ENCODE measurements at regions of chr2 and their contacts with region 1.

Region 1: GRCh38 chr2:33033606-33034081 is 86.9 kb downstream of the LTBP1 start:
- DNase-seq: peak; percentile 72
- ATAC-seq: peak; percentile 93
- H3K4me3 ChIP-seq: no peak overlapping the region
- H3K27ac ChIP-seq: no peak overlapping the region
- H3K4me1 ChIP-seq: 0 out of 2 replicates have a peak, but pooled peaks cover 5% of the 10 kb centered on the region
- H3K27me3 ChIP-seq: no peaks in the 10 kb centered on the region
- CTCF ChIP-seq: peak; percentile 91

Region 2: DNA sequence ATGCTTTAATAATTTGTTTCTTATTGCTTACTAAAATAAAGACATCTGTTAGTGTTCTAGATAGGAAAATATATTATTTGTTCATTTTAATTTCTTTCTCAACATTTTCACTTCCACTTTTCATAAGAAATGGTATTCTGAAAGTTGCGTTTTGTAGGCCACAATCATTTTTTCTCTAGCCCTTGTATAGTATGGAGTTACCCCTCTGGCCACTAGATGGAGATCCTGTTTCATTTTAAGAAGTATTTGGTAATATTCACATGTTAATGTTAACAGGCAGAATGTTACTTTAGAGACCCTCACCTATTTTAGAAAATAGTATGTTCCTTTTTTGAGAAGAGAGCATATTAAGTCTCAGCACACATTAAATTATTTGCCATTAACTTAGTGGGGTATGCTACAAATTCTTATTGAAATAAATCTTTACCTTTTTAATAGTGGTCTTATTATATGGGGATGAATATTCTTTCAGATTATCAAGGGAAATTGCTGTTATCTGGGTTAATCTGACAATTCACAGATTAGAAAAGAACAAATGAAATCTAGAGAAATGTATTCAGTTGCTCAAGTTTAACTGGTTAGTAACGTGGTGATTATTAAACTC is 479.7 kb before region 1 on chr2:
- CTCF ChIA-PET with region 1: no interaction called
- POLR2A ChIA-PET with region 1: no interaction called
- intact Hi-C with region 1: loop called (anchors 1 kb)
- DNase-seq: peak; percentile 54
- ATAC-seq: peak; percentile 77
- H3K4me3 ChIP-seq: no peak overlapping the region
- H3K27ac ChIP-seq: no peak overlapping the region
- H3K4me1 ChIP-seq: no peaks in the 10 kb centered on the region
- H3K27me3 ChIP-seq: no peaks in the 10 kb centered on the region
- CTCF ChIP-seq: peak; percentile 83

Region 3: DNA sequence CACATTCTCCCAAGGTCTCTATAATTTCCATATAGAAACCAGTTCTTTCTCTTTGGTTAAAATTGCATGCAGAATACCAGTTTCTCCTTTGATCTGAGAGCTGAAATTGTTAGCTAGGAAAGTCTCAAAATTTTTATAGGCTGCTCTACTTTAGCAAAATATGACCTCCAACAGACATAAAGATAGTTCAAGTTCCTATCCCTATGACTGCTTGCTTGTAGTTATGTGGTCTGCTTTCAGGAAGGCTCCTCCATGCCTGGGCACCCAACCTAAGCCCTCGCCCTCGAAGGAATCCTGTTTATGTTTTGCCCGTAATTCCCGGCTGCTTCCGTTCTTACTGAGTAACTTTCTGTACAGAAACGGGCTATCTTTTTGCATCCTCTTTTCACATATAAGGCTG is 114.9 kb before region 1 on chr2:
- CTCF ChIA-PET with region 1: no interaction called
- POLR2A ChIA-PET with region 1: no interaction called
- intact Hi-C with region 1: no loop called
- DNase-seq: no peak
- ATAC-seq: no peak
- H3K4me3 ChIP-seq: no peak overlapping the region
- H3K27ac ChIP-seq: no peak overlapping the region
- H3K4me1 ChIP-seq: no peaks in the 10 kb centered on the region
- H3K27me3 ChIP-seq: no peaks in the 10 kb centered on the region
- CTCF ChIP-seq: no peak

Region 4: GRCh38 chr2:32946314-32947075 is 87.1 kb before region 1 on chr2 and contains the start of gene LTBP1:
- CTCF ChIA-PET with region 1: interaction called, 7 read pairs
- POLR2A ChIA-PET with region 1: no interaction called
- intact Hi-C with region 1: loop called (anchors 1 kb)
- DNase-seq: peak; percentile 80
- ATAC-seq: peak; percentile 75
- H3K4me3 ChIP-seq: peak within 1 kb of the TSS; percentile 72
- H3K27ac ChIP-seq: 0 out of 2 replicates have a peak within 1 kb of the TSS, but pooled peaks have one; percentile 21
- H3K4me1 ChIP-seq: peaks cover 7% of the 10 kb centered on the region
- H3K27me3 ChIP-seq: no peaks in the 10 kb centered on the region
- CTCF ChIP-seq: peak; percentile 95
- total RNA-seq, gene LTBP1: 34.0 and 45.9 TPM in 2 replicates

Region 5: DNA sequence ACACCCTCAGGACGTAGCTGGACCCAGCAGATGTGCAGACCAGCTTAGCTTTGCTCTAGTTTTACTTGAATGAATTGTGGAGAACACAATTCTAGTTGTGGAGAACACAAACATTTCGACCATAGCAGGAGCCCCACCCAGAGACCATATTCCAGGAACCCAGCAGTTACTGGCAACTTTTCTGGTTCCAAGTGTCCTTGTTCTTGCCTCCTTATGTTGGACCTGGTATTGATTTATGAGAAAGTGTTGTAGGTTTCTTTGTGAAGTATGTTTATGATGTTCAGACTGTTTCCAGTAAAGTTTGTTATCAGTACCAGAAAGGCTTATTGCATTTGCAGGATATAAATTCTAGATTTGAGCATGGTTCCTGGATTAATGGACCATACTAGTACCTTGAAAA is 35.9 kb before region 1 on chr2:
- CTCF ChIA-PET with region 1: no interaction called
- POLR2A ChIA-PET with region 1: no interaction called
- intact Hi-C with region 1: no loop called
- DNase-seq: no peak
- ATAC-seq: no peak
- H3K4me3 ChIP-seq: no peak overlapping the region
- H3K27ac ChIP-seq: no peak overlapping the region
- H3K4me1 ChIP-seq: no peaks in the 10 kb centered on the region
- H3K27me3 ChIP-seq: no peaks in the 10 kb centered on the region
- CTCF ChIP-seq: no peak

Region 6: GRCh38 chr2:33086400-33087015 is 52.9 kb after region 1 on chr2:
- CTCF ChIA-PET with region 1: interaction called, 11 read pairs
- POLR2A ChIA-PET with region 1: no interaction called
- intact Hi-C with region 1: loop called (anchors 1 kb)
- DNase-seq: peak; percentile 29
- ATAC-seq: peak; percentile 60
- H3K4me3 ChIP-seq: no peak overlapping the region
- H3K27ac ChIP-seq: no peak overlapping the region
- H3K4me1 ChIP-seq: peaks cover 9% of the 10 kb centered on the region
- H3K27me3 ChIP-seq: no peaks in the 10 kb centered on the region
- CTCF ChIP-seq: no peak

Region 7: GRCh38 chr2:33229646-33230045 is 196.0 kb after region 1 on chr2:
- CTCF ChIA-PET with region 1: interaction called, 6 read pairs
- POLR2A ChIA-PET with region 1: no interaction called
- intact Hi-C with region 1: loop called (anchors 2 kb)
- DNase-seq: peak; percentile 33
- ATAC-seq: peak; percentile 8; the same call in 1 of the 2 replicates
- H3K4me3 ChIP-seq: no peak overlapping the region
- H3K27ac ChIP-seq: peak overlapping the region; percentile 93
- H3K4me1 ChIP-seq: peaks cover 38% of the 10 kb centered on the region
- H3K27me3 ChIP-seq: no peaks in the 10 kb centered on the region
- CTCF ChIP-seq: peak; percentile 25; the same call in 1 of the 2 replicates

Region 8: DNA sequence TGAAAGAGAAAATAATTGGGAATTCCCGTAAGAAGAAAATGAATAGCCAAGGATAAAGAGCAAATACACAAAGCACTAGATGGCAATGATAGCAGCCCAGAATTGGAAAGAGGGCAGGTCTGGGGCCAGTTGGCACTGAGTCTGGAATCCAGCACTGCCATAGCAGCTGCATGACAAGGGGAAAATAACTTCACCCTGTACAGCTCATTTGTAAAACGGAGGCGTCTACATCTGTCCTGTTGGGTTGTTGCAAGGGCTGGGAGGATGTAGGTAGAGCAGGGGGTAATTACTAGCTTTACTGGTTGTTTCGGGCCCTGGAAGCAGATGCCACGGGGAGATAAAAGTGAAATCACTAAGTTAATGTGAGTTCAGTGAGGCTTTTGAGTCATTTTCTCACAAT is 332.8 kb after region 1 on chr2:
- CTCF ChIA-PET with region 1: no interaction called
- POLR2A ChIA-PET with region 1: no interaction called
- intact Hi-C with region 1: no loop called
- DNase-seq: no peak
- ATAC-seq: no peak
- H3K4me3 ChIP-seq: no peak overlapping the region
- H3K27ac ChIP-seq: no peak overlapping the region
- H3K4me1 ChIP-seq: 0 out of 2 replicates have a peak, but pooled peaks cover 8% of the 10 kb centered on the region
- H3K27me3 ChIP-seq: no peaks in the 10 kb centered on the region
- CTCF ChIP-seq: no peak

Region 9: DNA sequence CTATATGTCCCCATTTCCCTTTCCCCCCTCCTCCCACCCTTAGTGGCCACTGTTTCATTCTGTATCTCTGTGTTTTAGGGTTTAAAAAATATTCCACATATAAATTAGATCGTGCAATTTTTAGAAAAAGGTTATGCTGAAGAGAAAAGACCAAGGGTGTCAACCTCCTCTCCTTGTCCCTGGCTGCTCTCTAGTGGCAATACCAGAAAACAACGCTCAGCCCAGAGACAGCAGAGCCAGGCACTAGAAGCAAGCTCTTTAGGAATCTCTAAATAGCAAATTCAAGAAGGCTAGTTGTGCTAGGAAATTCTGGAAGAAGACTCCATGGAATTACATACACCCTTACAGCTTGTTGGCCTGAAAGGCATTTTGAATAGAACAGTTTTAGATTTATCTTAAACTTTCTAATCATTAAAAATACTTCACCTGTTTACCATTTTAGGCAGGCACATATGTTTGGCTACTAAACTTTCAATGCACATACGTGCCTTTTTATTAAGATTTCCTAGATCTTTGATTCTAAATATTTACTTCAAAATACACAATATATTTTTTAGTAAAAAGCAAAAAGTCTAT is 407.7 kb after region 1 on chr2:
- CTCF ChIA-PET with region 1: interaction called, 5 read pairs
- POLR2A ChIA-PET with region 1: no interaction called
- intact Hi-C with region 1: loop called (anchors 2 kb)
- DNase-seq: peak; percentile 68
- ATAC-seq: peak; percentile 90
- H3K4me3 ChIP-seq: no peak overlapping the region
- H3K27ac ChIP-seq: no peak overlapping the region
- H3K4me1 ChIP-seq: peaks cover 16% of the 10 kb centered on the region
- H3K27me3 ChIP-seq: no peaks in the 10 kb centered on the region
- CTCF ChIP-seq: peak; percentile 85

Measured in PC-3 (cell line).